ACHN (cell line): ENCODE measurements at regions of chr2 and their contacts with region 1.

Region 1: GRCh38 chr2:1591978-1592907 is 152.1 kb downstream of the PXDN start:
- DNase-seq: peak; percentile 81

Region 2: DNA sequence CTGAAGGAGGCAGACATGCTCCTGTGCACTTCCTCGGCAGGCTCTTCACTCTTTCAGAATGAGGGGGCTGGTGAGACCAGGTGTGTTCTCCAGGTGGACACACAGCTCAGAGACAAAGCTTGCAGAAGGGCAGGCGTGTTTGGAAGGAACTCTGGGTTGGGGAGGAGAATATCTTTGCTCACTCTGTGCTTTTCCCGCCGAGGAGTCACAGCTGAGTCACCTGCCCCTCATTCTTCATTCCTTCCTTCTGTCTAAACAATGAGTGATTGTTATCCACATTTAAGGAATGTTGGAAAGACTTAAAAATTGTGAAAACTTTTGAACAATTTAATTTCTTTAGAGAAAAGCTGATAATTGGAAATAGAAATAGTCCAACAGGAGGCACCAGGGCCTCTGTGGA is 305.3 kb before region 1 on chr2:
- in situ Hi-C with region 1: no loop called
- DNase-seq: no peak

Region 3: GRCh38 chr2:1742681-1743395 is 150.6 kb after region 1 on chr2:
- in situ Hi-C with region 1: loop called (anchors 25 kb)
- DNase-seq: peak; percentile 94

Region 4: DNA sequence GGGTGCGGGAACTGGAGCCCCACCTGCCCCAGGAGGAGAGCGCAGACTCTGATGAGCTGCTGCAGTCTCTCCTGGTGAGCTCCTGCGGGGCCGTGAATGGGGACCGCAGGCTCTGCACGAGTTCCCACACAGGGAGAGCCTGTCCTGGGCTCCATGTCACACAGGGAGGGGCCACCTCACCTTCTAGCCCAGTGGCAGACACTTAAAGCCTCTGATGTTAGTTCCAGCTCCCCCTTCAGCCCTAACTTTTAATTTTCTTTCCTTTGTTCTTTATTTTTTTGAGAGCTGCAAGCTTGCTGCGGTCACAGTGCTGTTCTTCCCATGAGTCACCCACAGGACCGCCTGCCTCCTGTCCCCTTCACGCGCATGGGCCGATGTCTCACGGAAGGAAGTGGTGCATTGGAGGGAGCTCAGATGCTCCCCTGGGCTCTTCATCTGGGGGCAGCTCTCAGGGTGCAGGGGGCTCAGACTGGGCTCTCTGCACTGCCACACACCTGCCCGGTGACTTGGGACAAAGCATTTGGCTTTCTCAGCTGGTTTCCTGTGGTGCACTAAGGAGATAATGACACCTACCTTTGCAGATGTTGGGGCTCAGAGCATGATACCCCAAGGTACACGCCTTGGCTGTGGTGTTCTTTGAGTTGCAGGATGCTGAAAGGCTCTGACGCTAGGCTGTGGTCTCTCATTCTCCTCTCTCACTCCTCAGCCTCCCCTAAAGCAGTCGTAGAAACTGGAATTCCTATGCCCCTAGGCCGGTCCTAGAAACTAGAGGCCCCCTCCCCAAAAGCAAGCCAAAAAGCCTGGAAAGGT is 189.2 kb after region 1 on chr2:
- in situ Hi-C with region 1: no loop called
- DNase-seq: no peak